Uterus (tissue), 4 donors: ENCODE measurements at regions of chr7 and their contacts with region 1.

Region 1: GRCh38 chr7:154627646-154628290 is 375.2 kb downstream of the PAXIP1 start:
- DNase-seq: no peak
- H3K4me3 ChIP-seq: no peak overlapping the region
- H3K27ac ChIP-seq: no peak overlapping the region
- H3K4me1 ChIP-seq: no peaks in the 10 kb centered on the region
- H3K27me3 ChIP-seq: no peaks in the 10 kb centered on the region
- CTCF ChIP-seq: no peak
- POLR2A ChIP-seq: no peak

Region 2: DNA sequence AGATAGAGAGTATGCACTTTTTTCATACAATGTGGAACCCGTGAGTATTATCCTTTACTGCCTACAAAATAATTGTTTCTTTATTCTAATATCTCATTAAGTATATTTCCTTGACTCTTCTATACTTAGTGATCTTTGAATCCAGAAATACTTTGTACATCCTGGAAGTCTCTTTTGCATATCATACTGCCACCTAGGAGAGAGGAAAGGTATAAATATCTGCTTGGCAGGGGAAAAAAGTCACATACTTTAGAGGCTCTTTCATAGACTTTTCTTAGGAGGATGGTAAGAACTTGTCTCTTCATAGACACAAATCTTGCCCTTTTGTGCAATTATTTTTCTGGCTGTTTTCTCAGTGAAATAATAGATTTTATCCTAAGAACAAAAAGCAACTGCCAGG is 60.9 kb before region 1 on chr7:
- intact Hi-C with region 1: loop called (anchors 10 kb)
- DNase-seq: no peak
- H3K4me3 ChIP-seq: no peak overlapping the region
- H3K27ac ChIP-seq: no peak overlapping the region
- H3K4me1 ChIP-seq: no peaks in the 10 kb centered on the region
- H3K27me3 ChIP-seq: no peaks in the 10 kb centered on the region
- CTCF ChIP-seq: no peak
- POLR2A ChIP-seq: no peak

Region 3: GRCh38 chr7:154684666-154685563 is 57.1 kb after region 1 on chr7:
- intact Hi-C with region 1: no loop called
- DNase-seq: no peak
- H3K4me3 ChIP-seq: no peak overlapping the region
- H3K27ac ChIP-seq: no peak overlapping the region
- H3K4me1 ChIP-seq: no peaks in the 10 kb centered on the region
- H3K27me3 ChIP-seq: no peaks in the 10 kb centered on the region
- CTCF ChIP-seq: no peak
- POLR2A ChIP-seq: no peak